ENCODE measurements at regions of chr1 and their contacts with region 1.

Region 1: DNA sequence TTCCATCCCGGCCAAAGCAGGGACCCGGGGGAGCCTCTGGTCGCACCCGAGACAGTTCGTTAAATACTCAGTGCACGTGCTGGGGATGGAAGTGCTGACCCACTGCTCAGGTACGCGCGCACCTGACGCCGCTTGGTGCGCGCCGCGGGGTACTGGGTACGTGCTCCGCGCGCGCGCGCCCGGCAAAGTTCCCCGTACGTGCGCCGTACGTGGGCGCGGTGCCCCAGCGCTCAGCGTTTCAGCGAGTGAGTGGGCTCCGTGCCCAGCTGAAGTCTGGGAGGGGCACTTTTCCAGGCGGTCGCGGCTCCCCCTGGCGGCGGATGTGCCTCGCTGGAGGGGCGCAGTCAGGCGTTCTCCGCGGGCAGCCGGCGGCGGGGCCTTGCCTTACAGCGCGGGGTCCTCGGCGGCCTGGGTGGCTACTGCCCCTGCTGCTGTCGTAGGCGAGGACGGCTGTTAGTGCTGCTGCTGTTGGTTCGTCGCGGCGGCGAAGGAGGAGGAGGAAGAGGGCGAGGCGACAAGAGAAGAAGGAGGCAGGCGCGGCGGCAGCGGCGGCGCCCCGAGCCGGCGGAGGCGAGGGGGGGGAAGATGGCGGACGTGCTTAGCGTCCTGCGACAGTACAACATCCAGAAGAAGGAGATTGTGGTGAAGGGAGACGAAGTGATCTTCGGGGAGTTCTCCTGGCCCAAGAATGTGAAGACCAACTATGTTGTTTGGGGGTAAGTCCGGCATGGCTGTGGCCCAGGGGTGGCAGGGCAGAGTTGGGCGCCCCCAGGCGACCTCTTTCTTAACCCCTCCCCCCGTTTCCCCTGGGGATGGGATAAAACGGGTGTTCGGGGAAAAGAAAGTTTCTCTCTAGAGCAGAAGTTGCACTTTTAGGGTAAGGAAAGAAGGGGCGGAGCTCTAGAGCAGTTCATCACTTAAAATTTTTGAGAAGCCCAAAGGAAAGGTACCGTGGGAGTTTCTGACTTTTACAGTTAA is at the start of gene CDC73:
- DNase-seq: peak; percentile 96
- H3K4me3 ChIP-seq: peak within 1 kb of the TSS; percentile 92
- H3K27ac ChIP-seq: peak within 1 kb of the TSS; percentile 95
- H3K4me1 ChIP-seq: peaks cover 25% of the 10 kb centered on the region
- CTCF ChIP-seq: peak; percentile 78
- total RNA-seq, gene CDC73: 12.9 and 25.9 TPM in 2 replicates

Region 2: GRCh38 chr1:192477630-192478029 is 644.3 kb before region 1 on chr1:
- CTCF ChIA-PET with region 1: no interaction called
- POLR2A ChIA-PET with region 1: no interaction called
- intact Hi-C with region 1: loop called (anchors 5 kb)
- DNase-seq: peak; percentile 58
- H3K4me3 ChIP-seq: no peak overlapping the region
- H3K27ac ChIP-seq: no peak overlapping the region
- H3K4me1 ChIP-seq: no peaks in the 10 kb centered on the region
- CTCF ChIP-seq: peak; percentile 90

Region 3: DNA sequence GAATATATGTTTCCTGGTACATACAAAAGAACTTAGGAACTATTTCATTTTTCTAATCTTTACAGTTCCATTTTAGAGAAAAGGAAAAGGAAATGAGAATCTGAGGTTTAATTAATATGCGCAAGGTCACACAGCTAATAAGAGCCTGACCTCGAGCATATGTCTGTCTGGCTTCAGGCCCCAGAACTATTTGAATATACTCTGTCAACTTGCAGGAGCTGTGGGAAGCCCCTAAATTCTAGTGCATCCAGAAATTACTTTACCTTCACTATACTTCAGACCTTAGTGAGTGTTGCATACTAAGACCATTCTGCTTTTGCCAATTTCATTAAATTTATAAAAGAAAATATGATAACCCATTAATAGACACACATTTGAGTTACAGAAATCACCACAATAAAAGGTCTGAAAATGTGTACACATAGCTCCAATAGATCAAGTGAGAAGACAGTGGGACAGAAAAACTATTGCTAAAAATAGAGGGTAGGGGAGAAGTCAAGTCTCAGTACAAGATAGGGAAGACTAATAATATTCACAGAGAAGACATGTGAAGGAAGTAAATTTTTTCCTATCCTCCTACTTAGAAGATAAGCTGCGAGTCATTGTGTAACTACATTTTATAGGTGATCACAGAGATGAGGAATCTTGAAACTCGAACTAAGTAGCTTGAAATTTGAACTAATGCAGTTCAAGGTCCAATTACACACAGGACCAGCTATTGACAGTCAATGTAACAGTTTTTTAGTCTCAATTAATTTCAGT is 482.1 kb before region 1 on chr1:
- CTCF ChIA-PET with region 1: no interaction called
- POLR2A ChIA-PET with region 1: interaction called, 6 read pairs
- intact Hi-C with region 1: loop called (anchors 5 kb)
- DNase-seq: peak; percentile 42
- H3K4me3 ChIP-seq: peak overlapping the region; percentile 80
- H3K27ac ChIP-seq: peak overlapping the region; percentile 100
- H3K4me1 ChIP-seq: peaks cover 42% of the 10 kb centered on the region
- CTCF ChIP-seq: no peak

Region 4: DNA sequence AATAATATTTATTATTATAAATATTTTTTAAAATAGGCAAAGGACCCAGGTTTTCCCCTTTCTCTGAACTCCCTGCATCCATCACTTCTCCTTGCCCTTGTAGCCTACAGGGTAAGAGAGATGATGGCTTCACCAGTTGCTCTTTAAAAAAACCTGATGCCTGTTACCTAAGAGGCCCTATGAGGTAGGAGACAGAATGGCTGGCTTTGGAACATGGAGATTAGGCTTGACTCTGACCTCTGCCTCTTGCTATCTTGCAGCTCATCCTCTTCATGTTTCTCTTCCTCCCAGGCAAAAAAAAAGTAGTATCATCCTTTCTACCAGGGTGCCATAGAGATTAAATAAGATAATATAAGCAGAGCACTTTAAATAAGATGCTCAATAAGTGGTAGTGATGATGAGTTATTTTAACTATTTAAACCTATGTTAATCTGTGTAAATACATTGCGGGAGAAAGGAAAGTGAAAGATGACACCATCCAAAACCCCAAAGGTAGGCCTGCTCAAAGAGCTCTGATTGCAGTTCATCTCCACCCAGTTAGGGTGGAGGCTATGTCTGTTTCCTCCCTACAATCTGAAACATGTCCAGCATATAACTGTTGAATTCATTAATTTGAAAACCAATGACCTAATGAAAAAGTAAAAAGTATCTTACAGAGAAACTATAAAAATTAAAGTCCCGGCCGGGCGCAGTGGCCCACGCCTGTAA is 261.3 kb before region 1 on chr1:
- CTCF ChIA-PET with region 1: no interaction called
- POLR2A ChIA-PET with region 1: no interaction called
- intact Hi-C with region 1: no loop called
- DNase-seq: no peak
- H3K4me3 ChIP-seq: no peak overlapping the region
- H3K27ac ChIP-seq: no peak overlapping the region
- H3K4me1 ChIP-seq: no peaks in the 10 kb centered on the region
- CTCF ChIP-seq: no peak

Region 5: GRCh38 chr1:193059268-193060225 is 62.4 kb before region 1 on chr1 and contains the starts of genes RO60 and UCHL5:
- CTCF ChIA-PET with region 1: no interaction called
- POLR2A ChIA-PET with region 1: interaction called, 4 read pairs
- intact Hi-C with region 1: loop called (anchors 1 kb)
- DNase-seq: peak; percentile 97
- H3K4me3 ChIP-seq: peak within 1 kb of the TSS; percentile 100
- H3K27ac ChIP-seq: peak within 1 kb of the TSS; percentile 82
- H3K4me1 ChIP-seq: peaks cover 39% of the 10 kb centered on the region
- CTCF ChIP-seq: no peak
- total RNA-seq, gene RO60: 70.4 and 72.4 TPM in 2 replicates
- total RNA-seq, gene UCHL5: 28.6 and 32.7 TPM in 2 replicates

Region 6: GRCh38 chr1:193104906-193105820 is 16.7 kb before region 1 on chr1 and contains the start of gene GLRX2:
- CTCF ChIA-PET with region 1: interaction called, 5 read pairs
- POLR2A ChIA-PET with region 1: interaction called, 14 read pairs
- intact Hi-C with region 1: loop called (anchors 1 kb)
- DNase-seq: peak; percentile 75
- H3K4me3 ChIP-seq: peak within 1 kb of the TSS; percentile 84
- H3K27ac ChIP-seq: peak within 1 kb of the TSS; percentile 23
- H3K4me1 ChIP-seq: peaks cover 15% of the 10 kb centered on the region
- CTCF ChIP-seq: peak; percentile 42
- total RNA-seq, gene GLRX2: 10.6 and 11.0 TPM in 2 replicates

Region 7: GRCh38 chr1:193111641-193112090 is 10.2 kb before region 1 on chr1:
- CTCF ChIA-PET with region 1: interaction called, 5 read pairs
- POLR2A ChIA-PET with region 1: interaction called, 14 read pairs
- intact Hi-C with region 1: no loop called
- DNase-seq: no peak
- H3K4me3 ChIP-seq: no peak overlapping the region
- H3K27ac ChIP-seq: no peak overlapping the region
- H3K4me1 ChIP-seq: no peaks in the 10 kb centered on the region
- CTCF ChIP-seq: no peak

Region 8: GRCh38 chr1:193143285-193143684 is 21.4 kb after region 1 on chr1:
- CTCF ChIA-PET with region 1: no interaction called
- POLR2A ChIA-PET with region 1: interaction called, 14 read pairs
- intact Hi-C with region 1: no loop called
- DNase-seq: peak; percentile 24
- H3K4me3 ChIP-seq: no peak overlapping the region
- H3K27ac ChIP-seq: no peak overlapping the region
- H3K4me1 ChIP-seq: no peaks in the 10 kb centered on the region
- CTCF ChIP-seq: peak; percentile 74